ENCODE measurements at regions of chr1 and their contacts with region 1.

Region 1: DNA sequence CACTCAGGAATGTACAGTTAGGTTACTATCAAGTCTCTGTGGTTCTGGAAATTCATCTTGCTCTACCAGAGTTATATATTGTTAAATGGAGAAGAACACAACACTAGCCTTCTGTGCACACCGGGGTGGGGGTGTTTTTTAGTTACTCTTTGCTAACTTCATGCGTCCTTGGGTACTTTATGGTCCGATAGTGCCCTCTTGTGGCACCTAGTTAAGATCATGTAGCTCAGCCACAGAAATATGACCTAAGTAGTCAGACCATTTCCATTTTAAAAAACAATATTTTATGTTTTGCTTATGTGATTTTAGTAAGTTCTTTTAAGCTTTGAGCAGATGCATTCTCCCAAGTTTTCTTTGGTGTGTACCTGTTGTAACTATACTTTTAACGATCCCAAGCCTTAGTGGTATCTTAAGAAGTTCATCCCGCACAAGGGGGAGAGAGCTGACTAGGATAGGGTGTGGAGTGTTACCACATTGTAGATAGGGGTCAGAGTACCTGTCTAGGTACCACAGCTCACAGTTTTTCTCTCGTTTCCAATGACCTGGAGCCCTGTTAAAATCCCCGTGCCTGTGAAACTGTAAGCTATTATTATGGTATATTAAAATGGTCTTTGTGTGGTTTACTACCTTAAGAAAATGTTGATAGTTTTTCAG is 20.6 kb upstream of the SH3D21 start:
- DNase-seq: peak; percentile 86
- ATAC-seq: peak; percentile 86
- H3K4me3 Mint-ChIP-seq: no peak overlapping the region
- H3K27ac Mint-ChIP-seq: peak overlapping the region; percentile 58
- H3K4me1 Mint-ChIP-seq: peaks cover 32% of the 10 kb centered on the region
- H3K27me3 Mint-ChIP-seq: no peaks in the 10 kb centered on the region
- CTCF ChIP-seq: peak; percentile 76

Region 2: GRCh38 chr1:36099681-36100341 is 185.8 kb before region 1 on chr1:
- CTCF ChIA-PET with region 1: interaction called, 4 read pairs
- POLR2A ChIA-PET with region 1: no interaction called
- intact Hi-C with region 1: loop called (anchors 10 kb)
- DNase-seq: peak; percentile 86
- ATAC-seq: peak; percentile 92
- H3K4me3 Mint-ChIP-seq: no peak overlapping the region
- H3K27ac Mint-ChIP-seq: no peak overlapping the region
- H3K4me1 Mint-ChIP-seq: peaks cover 6% of the 10 kb centered on the region
- H3K27me3 Mint-ChIP-seq: no peaks in the 10 kb centered on the region
- CTCF ChIP-seq: peak; percentile 93

Region 3: DNA sequence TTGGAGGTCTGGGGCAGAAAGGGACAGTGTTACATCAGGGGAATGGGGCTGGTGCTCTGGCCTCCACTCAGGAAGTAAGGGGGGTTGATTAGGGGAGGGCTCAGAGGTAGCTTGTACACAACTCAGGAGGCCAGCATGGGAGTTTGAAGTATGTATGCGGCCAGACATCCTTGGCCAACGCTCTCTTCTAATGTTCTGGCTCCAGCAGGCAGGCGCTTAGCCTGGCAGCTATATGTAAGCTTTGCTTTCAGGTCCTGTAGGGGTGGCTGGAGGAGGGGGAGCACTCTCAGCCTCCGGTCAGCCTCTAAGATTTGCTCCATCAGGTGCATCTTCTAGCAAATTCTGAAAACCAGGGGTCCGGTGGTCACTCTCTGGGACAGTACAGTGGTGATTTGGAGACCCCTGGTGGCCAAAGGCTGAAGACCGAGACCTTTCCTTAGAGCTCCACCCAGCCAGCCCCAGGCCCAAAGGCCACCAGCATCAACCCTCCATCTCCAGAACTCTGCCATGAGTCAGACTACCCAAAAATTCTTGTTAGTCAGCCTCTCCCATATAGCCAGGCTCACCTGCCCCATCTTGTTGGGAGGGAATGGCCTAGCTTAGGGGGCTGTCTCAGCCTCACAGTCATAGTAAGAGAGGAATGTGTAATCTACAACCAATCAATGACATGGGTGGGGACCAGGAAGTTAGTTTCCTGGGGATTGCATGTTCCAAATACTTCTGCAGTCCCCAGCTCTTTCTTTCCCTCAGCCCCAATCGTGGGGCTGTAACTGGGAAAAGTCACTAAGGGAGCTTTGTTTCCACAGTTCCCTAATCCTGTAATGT is 150.9 kb before region 1 on chr1:
- CTCF ChIA-PET with region 1: interaction called, 10 read pairs
- POLR2A ChIA-PET with region 1: no interaction called
- intact Hi-C with region 1: no loop called
- DNase-seq: peak; percentile 75
- ATAC-seq: peak; percentile 89
- H3K4me3 Mint-ChIP-seq: no peak overlapping the region
- H3K27ac Mint-ChIP-seq: peak overlapping the region; percentile 28
- H3K4me1 Mint-ChIP-seq: no peaks in the 10 kb centered on the region
- H3K27me3 Mint-ChIP-seq: no peaks in the 10 kb centered on the region
- CTCF ChIP-seq: peak; percentile 90

Region 4: DNA sequence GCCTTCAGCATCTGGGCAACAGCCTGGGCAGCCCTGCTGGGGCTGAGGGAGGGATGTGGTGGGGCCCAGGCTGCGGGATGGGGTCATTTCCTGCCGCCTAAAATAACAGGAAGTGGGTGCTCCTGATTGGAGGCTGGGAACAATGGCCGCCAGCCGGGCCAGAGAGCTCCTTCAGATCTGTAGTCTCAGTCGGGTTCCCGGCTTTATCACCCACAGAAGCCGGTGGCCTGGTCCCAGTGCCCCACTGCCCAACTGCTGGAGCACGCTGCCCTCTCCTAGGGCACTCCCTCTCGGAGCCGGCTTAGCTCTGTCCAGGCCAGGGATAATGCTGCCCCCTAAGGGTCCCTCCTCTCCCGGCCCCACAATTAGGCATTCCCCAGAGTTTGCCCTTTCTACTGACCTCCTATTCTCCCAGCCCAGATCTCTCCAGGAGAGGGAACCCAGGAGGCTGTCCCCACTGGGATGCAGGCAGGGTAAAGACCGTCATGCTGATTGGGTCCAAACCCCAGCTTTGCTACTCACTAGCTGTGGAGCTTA is 124.6 kb before region 1 on chr1:
- CTCF ChIA-PET with region 1: interaction called, 21 read pairs
- POLR2A ChIA-PET with region 1: interaction called, 7 read pairs
- intact Hi-C with region 1: no loop called
- DNase-seq: peak; percentile 88
- ATAC-seq: peak; percentile 56
- H3K4me3 Mint-ChIP-seq: peak overlapping the region; percentile 80
- H3K27ac Mint-ChIP-seq: peak overlapping the region; percentile 94
- H3K4me1 Mint-ChIP-seq: peaks cover 60% of the 10 kb centered on the region
- H3K27me3 Mint-ChIP-seq: no peaks in the 10 kb centered on the region
- CTCF ChIP-seq: no peak

Region 5: DNA sequence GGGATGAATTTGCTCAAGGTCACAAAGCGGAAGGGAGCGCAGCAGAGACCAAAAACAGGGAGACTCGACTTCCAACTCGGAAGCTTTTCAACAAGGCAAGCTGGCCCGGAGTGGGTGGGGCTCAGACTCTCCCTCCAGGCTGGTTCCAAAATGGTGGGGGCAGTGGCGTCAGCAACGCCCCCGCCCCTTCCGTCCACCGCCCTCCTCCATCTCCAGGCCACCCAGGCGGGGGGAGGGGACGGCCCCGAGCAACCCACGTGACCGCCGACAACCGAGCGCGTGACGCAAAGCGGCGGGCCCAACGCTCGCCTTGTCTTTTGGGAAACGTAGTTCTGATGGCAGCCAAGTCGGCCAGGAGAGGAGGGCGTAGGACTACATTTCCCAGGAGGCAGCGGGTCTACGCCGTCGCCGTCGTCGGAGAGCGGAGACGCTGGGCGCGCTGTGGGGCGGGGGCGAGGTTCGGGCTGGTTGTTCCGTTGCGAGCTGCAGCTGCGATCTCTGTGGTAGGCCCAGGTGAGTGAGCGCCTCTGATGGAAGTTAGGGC is 61.5 kb before region 1 on chr1 and contains the start of gene THRAP3:
- CTCF ChIA-PET with region 1: interaction called, 11 read pairs
- POLR2A ChIA-PET with region 1: interaction called, 3 read pairs
- intact Hi-C with region 1: no loop called
- DNase-seq: peak; percentile 100
- ATAC-seq: peak; percentile 91
- H3K4me3 Mint-ChIP-seq: peak within 1 kb of the TSS; percentile 85
- H3K27ac Mint-ChIP-seq: peak within 1 kb of the TSS; percentile 99
- H3K4me1 Mint-ChIP-seq: peaks cover 27% of the 10 kb centered on the region
- H3K27me3 Mint-ChIP-seq: no peaks in the 10 kb centered on the region
- CTCF ChIP-seq: no peak
- total RNA-seq, gene THRAP3: 119 to 121 TPM

Region 6: DNA sequence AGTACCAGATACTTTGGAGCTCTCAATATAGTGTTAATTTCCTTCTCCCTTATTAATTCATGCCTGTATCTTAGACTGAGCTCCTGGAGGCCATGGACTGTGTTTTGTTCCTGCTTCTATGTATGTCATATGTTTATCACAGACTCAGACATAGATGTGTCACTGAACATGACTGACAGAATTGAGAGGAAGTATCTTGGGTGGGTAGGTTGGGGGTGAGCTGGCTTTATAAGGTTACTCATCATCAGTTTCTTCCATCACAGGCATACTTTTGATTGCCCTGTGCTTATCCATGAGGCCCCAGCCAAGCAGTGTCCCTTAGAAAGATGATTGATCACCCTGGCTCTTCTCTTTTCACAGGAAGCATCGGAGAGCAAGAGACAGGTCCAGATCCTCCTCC is 15.0 kb after region 1 on chr1:
- CTCF ChIA-PET with region 1: interaction called, 26 read pairs
- POLR2A ChIA-PET with region 1: interaction called, 3 read pairs
- intact Hi-C with region 1: no loop called
- DNase-seq: peak; percentile 40
- ATAC-seq: peak; percentile 63
- H3K4me3 Mint-ChIP-seq: no peak overlapping the region
- H3K27ac Mint-ChIP-seq: peak overlapping the region; percentile 89
- H3K4me1 Mint-ChIP-seq: peaks cover 46% of the 10 kb centered on the region
- H3K27me3 Mint-ChIP-seq: no peaks in the 10 kb centered on the region
- CTCF ChIP-seq: no peak

Region 7: DNA sequence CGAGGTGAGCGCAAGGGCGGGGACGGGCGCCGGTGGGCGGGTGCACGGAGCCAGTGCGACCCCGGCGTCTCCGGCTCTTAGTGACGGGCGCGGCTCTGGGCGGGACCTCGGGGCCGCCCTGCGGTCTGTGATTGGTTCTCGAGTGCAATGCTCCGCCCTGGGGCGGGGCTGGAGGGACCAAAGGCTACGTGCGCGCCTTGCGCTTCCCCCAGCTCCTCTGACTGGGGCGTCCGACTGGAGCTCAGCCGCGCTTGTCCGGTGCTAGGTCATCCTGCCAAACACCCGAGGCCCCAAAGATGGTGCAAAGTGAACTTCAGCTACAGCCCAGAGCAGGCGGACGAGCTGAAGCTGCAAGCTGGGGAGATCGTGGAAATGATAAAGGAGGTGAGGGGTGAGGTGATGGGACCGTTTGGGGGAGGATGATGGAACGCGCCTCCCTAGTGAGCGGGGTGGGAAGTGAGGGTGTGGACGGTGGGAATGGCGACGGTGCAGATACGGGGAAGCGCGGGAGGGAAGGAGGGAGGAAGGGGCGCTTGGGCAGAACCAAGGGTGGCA is 21.4 kb after region 1 on chr1:
- CTCF ChIA-PET with region 1: interaction called, 10 read pairs
- POLR2A ChIA-PET with region 1: interaction called, 6 read pairs
- intact Hi-C with region 1: no loop called
- DNase-seq: peak; percentile 95
- ATAC-seq: peak; percentile 97
- H3K4me3 Mint-ChIP-seq: peak overlapping the region; percentile 93
- H3K27ac Mint-ChIP-seq: peak overlapping the region; percentile 92
- H3K4me1 Mint-ChIP-seq: peaks cover 32% of the 10 kb centered on the region
- H3K27me3 Mint-ChIP-seq: no peaks in the 10 kb centered on the region
- CTCF ChIP-seq: no peak